ENCODE measurements at regions of chr16 and their contacts with region 1.

Region 1: GRCh38 chr16:1610276-1611017 is 1.4 kb downstream of the IFT140 start:
- DNase-seq: peak; percentile 79 to 94 (median 84)
- ATAC-seq: peak; percentile 85
- H3K4me3 ChIP-seq: peak overlapping the region; percentile 72
- H3K27ac ChIP-seq: peak overlapping the region; percentile 88
- H3K4me1 ChIP-seq: peaks cover 13 to 43% of the 10 kb centered on the region in 2 experiments; a peak in 4 of 5 replicates
- H3K27me3 ChIP-seq: no peaks in the 10 kb centered on the region
- CTCF ChIP-seq: no peak
- EP300 ChIP-seq: no peak
- POLR2A ChIP-seq: peak; percentile 20; the same call in 1 of the 2 replicates
- RAD21 ChIP-seq: no peak; a peak in 1 of 4 replicates

Region 2: GRCh38 chr16:1782352-1783091 is 172.1 kb after region 1 on chr16 and contains the starts of genes NUBP2 and SPSB3:
- CTCF ChIA-PET with region 1: no interaction called
- POLR2A ChIA-PET with region 1: no interaction called
- in situ Hi-C with region 1: no loop called
- intact Hi-C with region 1: loop called (anchors 5 kb)
- DNase-seq: peak; percentile 94 to 100 (median 96)
- ATAC-seq: peak; percentile 93
- H3K4me3 ChIP-seq: peak within 1 kb of the TSS; percentile 99
- H3K27ac ChIP-seq: peak within 1 kb of the TSS; percentile 78
- H3K4me1 ChIP-seq: peaks cover 4 to 84% of the 10 kb centered on the region in 2 experiments; a peak in 3 of 5 replicates
- H3K27me3 ChIP-seq: no peaks in the 10 kb centered on the region
- CTCF ChIP-seq: no peak
- EP300 ChIP-seq: no peak
- POLR2A ChIP-seq: peak; percentile 54
- RAD21 ChIP-seq: no peak
- polyA plus RNA-seq, gene NUBP2: 1.8 to 7.7 TPM
- polyA plus RNA-seq, gene SPSB3: 0.39 to 1.3 TPM